Naive thymus-derived CD4-positive, alpha-beta T cell (primary cell): ENCODE measurements at regions of chr5 and their contacts with region 1.

Region 1: DNA sequence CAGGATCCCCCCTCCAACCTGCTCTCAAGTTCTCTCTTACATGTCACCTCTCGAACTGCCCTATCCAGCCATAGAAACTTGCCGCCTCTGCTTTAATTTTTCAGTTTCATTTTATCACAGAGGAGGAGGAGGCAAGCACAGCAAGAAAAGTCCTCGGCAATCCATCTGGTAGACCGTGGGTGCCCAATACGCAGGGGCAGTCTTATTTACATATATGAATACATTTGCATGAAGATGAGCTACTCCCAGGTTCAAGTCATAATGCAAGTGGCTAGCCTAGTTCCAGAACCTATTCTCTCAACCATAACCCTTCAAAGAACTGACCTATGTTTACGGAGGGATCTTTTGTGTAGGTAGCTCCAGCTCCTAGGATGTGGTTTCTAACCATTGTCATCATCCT is 223.2 kb upstream of the PANK3 start:
- DNase-seq: peak in 1 of 9 donors; percentile 31
- ATAC-seq: no peak
- H3K4me3 ChIP-seq: no peak overlapping the region
- H3K4me3 Mint-ChIP-seq: peak overlapping the region in 1 of 10 donors; percentile 77
- H3K27ac ChIP-seq: no peak overlapping the region
- H3K27ac Mint-ChIP-seq: peak overlapping the region in 1 of 9 donors; percentile 73
- H3K4me1 ChIP-seq: no peaks in the 10 kb centered on the region
- H3K4me1 Mint-ChIP-seq: peaks cover 0 to 27% (median 0%) of the 10 kb centered on the region in 7 donors
- H3K27me3 ChIP-seq: no peaks in the 10 kb centered on the region
- H3K27me3 Mint-ChIP-seq: peaks cover 0 to 25% (median 0%) of the 10 kb centered on the region in 5 donors

Region 2: GRCh38 chr5:168851902-168852321 is 49.6 kb after region 1 on chr5:
- CTCF ChIA-PET with region 1: no interaction called
- POLR2A ChIA-PET with region 1: no interaction called
- intact Hi-C with region 1: loop called in 1 of 2 experiments (anchors 5 kb)
- DNase-seq: peak in 2 of 9 donors; percentile 20 to 30
- ATAC-seq: no peak
- H3K4me3 ChIP-seq: no peak overlapping the region
- H3K4me3 Mint-ChIP-seq: peak overlapping the region in 4 of 10 donors; percentile 4 to 69 (median 12)
- H3K27ac ChIP-seq: no peak overlapping the region
- H3K27ac Mint-ChIP-seq: peak overlapping the region in 3 of 9 donors; percentile 56 to 79 (median 69)
- H3K4me1 ChIP-seq: no peaks in the 10 kb centered on the region
- H3K4me1 Mint-ChIP-seq: peaks cover 0 to 23% (median 10%) of the 10 kb centered on the region in 7 donors
- H3K27me3 ChIP-seq: no peaks in the 10 kb centered on the region
- H3K27me3 Mint-ChIP-seq: peaks cover 10 to 23% (median 12%) of the 10 kb centered on the region in 5 donors